PC-9 (cell line): ENCODE measurements at regions of chr5 and their contacts with region 1.

Region 1: GRCh38 chr5:43294226-43294625 is 19.0 kb downstream of the HMGCS1 start:
- DNase-seq: peak in 1 of 2 experiments; percentile 71
- H3K4me3 ChIP-seq: no peak overlapping the region
- H3K27ac ChIP-seq: peak overlapping the region; percentile 38
- H3K4me1 ChIP-seq: peaks cover 15% of the 10 kb centered on the region
- H3K27me3 ChIP-seq: no peaks in the 10 kb centered on the region
- CTCF ChIP-seq: no peak

Region 2: DNA sequence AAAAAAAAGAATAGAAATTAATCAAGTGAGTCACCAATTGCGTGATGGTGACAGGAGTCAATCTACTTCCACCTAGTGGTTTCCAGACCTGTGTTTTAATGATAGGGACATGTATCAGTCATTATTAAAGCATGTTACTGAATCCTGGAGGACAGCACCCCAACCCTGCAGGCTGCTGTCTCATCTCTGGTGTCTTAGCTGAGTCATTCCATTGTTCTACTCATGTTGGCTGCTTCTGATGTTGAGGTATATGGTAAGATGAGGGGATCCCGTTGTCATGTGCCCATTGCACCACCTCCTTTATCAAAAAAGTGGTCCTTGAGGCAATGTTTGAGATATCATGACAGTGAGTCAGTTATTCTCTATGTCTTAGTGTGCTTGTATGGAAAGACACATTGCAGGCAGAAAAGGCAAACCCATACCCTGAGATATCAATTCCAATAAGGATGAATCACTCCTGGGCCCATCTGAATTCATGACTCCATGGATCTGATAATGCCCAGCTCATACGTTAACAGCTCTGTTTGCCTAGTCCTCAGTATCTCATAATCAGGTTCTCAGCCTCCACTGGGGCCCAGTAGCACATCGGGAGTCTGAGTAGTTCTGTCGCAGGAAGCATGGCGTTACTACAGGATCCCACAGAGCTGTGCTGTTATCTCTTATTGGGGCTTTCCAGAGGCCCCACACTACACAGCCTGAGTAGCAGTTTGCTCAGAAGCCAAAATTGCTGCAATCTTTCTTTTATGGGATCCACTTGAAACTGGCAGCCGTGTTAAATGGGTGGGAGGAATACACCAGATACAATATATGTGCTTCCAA is 12.2 kb before region 1 on chr5:
- CTCF ChIA-PET with region 1: no interaction called
- POLR2A ChIA-PET with region 1: interaction called, 16 read pairs
- intact Hi-C with region 1: no loop called
- DNase-seq: no peak
- H3K4me3 ChIP-seq: no peak overlapping the region
- H3K27ac ChIP-seq: no peak overlapping the region
- H3K4me1 ChIP-seq: no peaks in the 10 kb centered on the region
- H3K27me3 ChIP-seq: no peaks in the 10 kb centered on the region; the same call in 1 of the 2 replicates
- CTCF ChIP-seq: no peak